PC-3 (cell line): ENCODE measurements at regions of chr2 and their contacts with region 1.

Region 1: GRCh38 chr2:140814141-140814540 is 1316.7 kb downstream of the LRP1B start:
- DNase-seq: no peak
- ATAC-seq: no peak
- H3K4me3 ChIP-seq: no peak overlapping the region
- H3K27ac ChIP-seq: no peak overlapping the region
- H3K4me1 ChIP-seq: no peaks in the 10 kb centered on the region
- H3K27me3 ChIP-seq: no peaks in the 10 kb centered on the region
- CTCF ChIP-seq: no peak

Region 2: GRCh38 chr2:140392824-140393223 is 421.3 kb before region 1 on chr2:
- CTCF ChIA-PET with region 1: no interaction called
- POLR2A ChIA-PET with region 1: no interaction called
- intact Hi-C with region 1: loop called (anchors 2 kb)
- DNase-seq: no peak
- ATAC-seq: no peak
- H3K4me3 ChIP-seq: no peak overlapping the region
- H3K27ac ChIP-seq: no peak overlapping the region
- H3K4me1 ChIP-seq: peaks cover 26% of the 10 kb centered on the region
- H3K27me3 ChIP-seq: no peaks in the 10 kb centered on the region
- CTCF ChIP-seq: no peak

Region 3: GRCh38 chr2:140650825-140651224 is 163.3 kb before region 1 on chr2:
- CTCF ChIA-PET with region 1: no interaction called
- POLR2A ChIA-PET with region 1: no interaction called
- intact Hi-C with region 1: loop called (anchors 10 kb)
- DNase-seq: peak; percentile 81
- ATAC-seq: peak; percentile 90
- H3K4me3 ChIP-seq: no peak overlapping the region
- H3K27ac ChIP-seq: peak overlapping the region; percentile 76
- H3K4me1 ChIP-seq: peaks cover 28% of the 10 kb centered on the region
- H3K27me3 ChIP-seq: no peaks in the 10 kb centered on the region
- CTCF ChIP-seq: no peak

Region 4: GRCh38 chr2:140842110-140842509 is 28.0 kb after region 1 on chr2:
- CTCF ChIA-PET with region 1: no interaction called
- POLR2A ChIA-PET with region 1: no interaction called
- intact Hi-C with region 1: no loop called
- DNase-seq: no peak
- ATAC-seq: no peak
- H3K4me3 ChIP-seq: no peak overlapping the region
- H3K27ac ChIP-seq: no peak overlapping the region
- H3K4me1 ChIP-seq: no peaks in the 10 kb centered on the region
- H3K27me3 ChIP-seq: no peaks in the 10 kb centered on the region
- CTCF ChIP-seq: no peak